K562 (cell line): ENCODE measurements at regions of chr2 and their contacts with region 1.

Region 1: DNA sequence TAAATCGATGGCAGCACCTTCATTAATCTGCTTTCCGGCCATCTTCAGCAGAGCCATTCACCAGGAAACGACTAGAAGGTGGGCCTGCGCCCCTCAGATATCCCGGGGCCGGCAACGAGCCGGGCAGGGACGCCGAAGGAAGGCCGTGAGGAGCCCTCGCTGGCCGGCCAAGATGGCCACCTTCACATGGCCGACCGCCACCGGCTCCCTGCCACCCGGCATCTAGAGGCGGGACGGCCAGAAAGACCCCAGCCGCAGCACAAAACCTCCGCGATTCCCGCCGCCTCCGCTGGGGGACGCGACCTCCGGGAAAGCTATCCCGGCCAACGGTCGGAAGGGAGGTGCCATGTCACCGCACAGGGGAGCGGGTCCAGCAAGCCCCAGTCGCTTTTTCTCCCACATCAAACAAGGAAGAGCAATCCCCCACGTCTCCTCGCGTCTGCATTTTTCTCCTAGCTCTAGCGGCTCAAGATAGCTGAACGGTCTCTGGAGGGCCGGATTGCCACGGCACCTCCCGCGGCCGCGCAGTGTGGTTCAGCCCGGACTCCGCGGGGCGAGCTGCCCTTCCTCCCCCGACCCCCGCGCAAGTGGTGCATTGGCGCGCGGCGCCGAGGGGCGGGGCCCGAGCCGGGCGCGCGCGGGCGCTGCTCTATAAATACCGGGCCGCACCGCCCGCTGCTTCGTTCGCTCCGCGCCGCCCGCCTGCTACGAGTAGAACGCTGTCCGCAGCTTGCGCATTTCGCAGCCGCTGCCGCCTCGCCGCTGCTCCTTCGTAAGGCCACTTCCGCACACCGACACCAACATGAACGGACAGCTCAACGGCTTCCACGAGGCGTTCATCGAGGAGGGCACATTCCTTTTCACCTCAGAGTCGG is at the start of gene MAT2A:
- DNase-seq: peak; percentile 88 to 95 (median 91)
- ATAC-seq: peak; percentile 73
- H3K4me3 ChIP-seq: peak within 1 kb of the TSS; percentile 68
- H3K27ac ChIP-seq: peak within 1 kb of the TSS; percentile 100
- H3K4me1 ChIP-seq: peaks cover 9 to 24% of the 10 kb centered on the region in 2 experiments
- H3K27me3 ChIP-seq: no peaks in the 10 kb centered on the region
- CTCF ChIP-seq: peak; percentile 78 to 86 (median 82)
- EP300 ChIP-seq: peak; percentile 70
- POLR2A ChIP-seq: peak; percentile 100
- RAD21 ChIP-seq: peak; percentile 60 to 72
- polyA plus RNA-seq, gene MAT2A: 130 to 197 TPM

Region 2: GRCh38 chr2:85385746-85386145 is 153.0 kb before region 1 on chr2:
- CTCF ChIA-PET with region 1: no interaction called
- POLR2A ChIA-PET with region 1: interaction called, 1,576 read pairs
- in situ Hi-C with region 1: no loop called
- intact Hi-C with region 1: no loop called
- DNase-seq: no peak
- ATAC-seq: no peak
- H3K4me3 ChIP-seq: no peak overlapping the region
- H3K27ac ChIP-seq: no peak overlapping the region
- H3K4me1 ChIP-seq: peaks cover 0 to 2% of the 10 kb centered on the region in 2 experiments; a peak in 3 of 5 replicates
- H3K27me3 ChIP-seq: no peaks in the 10 kb centered on the region
- CTCF ChIP-seq: no peak
- EP300 ChIP-seq: no peak
- POLR2A ChIP-seq: no peak
- RAD21 ChIP-seq: no peak

Region 3: GRCh38 chr2:85457877-85458316 is 80.8 kb before region 1 on chr2:
- CTCF ChIA-PET with region 1: no interaction called
- POLR2A ChIA-PET with region 1: interaction called, 25 read pairs
- in situ Hi-C with region 1: no loop called
- intact Hi-C with region 1: no loop called
- DNase-seq: no peak
- ATAC-seq: no peak
- H3K4me3 ChIP-seq: no peak overlapping the region
- H3K27ac ChIP-seq: no peak overlapping the region
- H3K4me1 ChIP-seq: peaks cover 2 to 10% of the 10 kb centered on the region in 2 experiments; a peak in 2 of 5 replicates
- H3K27me3 ChIP-seq: no peaks in the 10 kb centered on the region
- CTCF ChIP-seq: no peak
- EP300 ChIP-seq: no peak
- POLR2A ChIP-seq: no peak
- RAD21 ChIP-seq: no peak

Region 4: DNA sequence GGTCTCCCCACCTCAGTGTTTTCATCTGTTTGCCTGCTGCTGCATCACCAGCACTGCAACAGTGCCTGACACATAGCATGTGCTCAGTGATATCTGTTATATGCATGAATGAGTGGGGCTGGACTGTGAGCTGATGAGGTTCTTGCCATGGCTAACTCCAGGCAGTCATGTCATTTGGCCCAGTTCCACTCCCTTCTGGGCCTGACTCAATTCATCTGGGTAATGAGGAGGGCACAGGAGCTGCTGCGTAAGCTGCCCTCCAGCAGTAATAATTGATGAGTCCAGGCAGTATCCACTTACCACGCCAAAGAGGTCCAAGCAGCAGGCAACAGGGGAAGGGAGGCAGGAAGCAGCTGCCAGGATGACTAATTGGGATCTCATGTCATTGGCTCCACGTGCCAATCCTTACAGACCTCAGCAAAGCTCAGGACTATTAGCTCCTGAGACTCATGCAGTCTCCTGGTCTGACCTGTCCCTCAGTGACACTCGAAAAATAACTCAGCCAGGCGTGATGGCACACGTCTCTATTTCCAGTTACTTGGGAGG is 33.9 kb before region 1 on chr2:
- CTCF ChIA-PET with region 1: no interaction called
- POLR2A ChIA-PET with region 1: interaction called, 59 read pairs
- in situ Hi-C with region 1: no loop called
- intact Hi-C with region 1: loop called (anchors 1 kb)
- DNase-seq: peak in 1 of 4 experiments; percentile 54
- ATAC-seq: no peak
- H3K4me3 ChIP-seq: no peak overlapping the region
- H3K27ac ChIP-seq: no peak overlapping the region
- H3K4me1 ChIP-seq: peaks cover 32 to 38% of the 10 kb centered on the region in 2 experiments
- H3K27me3 ChIP-seq: no peaks in the 10 kb centered on the region
- CTCF ChIP-seq: no peak
- EP300 ChIP-seq: no peak
- POLR2A ChIP-seq: no peak
- RAD21 ChIP-seq: no peak

Region 5: DNA sequence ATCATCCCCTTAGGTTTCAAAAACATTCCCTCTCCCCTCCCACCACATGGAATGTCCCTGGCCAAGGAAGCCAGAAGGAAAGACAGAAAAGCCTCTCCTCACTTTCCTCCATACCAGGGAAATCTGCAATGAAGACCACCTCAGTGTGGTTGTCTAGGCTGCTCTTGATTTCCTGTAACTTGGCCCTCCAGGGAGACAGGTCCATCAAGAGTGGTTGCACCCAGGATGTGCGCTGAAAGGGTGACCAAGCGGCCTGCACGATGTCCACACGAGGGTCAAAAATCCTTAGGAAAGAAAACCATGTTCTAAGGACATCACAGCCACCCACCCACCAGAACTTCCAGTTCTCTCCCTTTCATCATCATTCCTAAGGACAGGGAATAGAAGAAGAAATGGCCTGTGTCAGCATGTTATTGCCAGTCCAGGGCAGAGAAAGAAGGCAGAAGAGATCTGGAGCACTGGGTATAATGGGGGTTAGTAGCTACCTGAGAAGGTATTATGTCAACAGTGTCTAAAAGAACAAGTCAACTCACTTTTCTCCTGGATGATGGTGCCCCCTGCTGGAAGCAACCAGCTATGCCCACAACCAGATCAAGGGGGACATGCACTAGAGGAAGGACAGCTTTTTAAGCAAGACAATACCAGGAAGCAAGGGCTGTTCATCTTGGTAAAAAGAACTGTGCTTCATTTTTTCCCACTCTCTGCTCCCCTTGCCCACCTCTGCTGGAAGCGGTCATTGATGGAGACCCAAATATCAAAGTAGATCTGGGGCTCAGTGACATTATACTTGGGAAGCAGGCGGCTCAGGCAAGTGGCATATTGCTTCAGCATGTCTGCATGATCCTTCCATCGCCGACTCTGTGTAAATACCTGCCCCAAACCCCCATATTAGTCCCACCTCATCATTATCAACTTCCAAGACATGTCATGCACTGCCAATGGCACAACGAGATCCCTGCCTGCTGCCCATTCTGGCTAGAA is 13.3 kb after region 1 on chr2:
- CTCF ChIA-PET with region 1: no interaction called
- POLR2A ChIA-PET with region 1: interaction called, 358 read pairs
- in situ Hi-C with region 1: no loop called
- intact Hi-C with region 1: no loop called
- DNase-seq: peak; percentile 64 to 88 (median 72)
- ATAC-seq: peak; percentile 81
- H3K4me3 ChIP-seq: no peak overlapping the region
- H3K27ac ChIP-seq: no peak overlapping the region; the same call in 2 of the 3 replicates
- H3K4me1 ChIP-seq: no peaks in the 10 kb centered on the region; a peak in 1 of 5 replicates
- H3K27me3 ChIP-seq: no peaks in the 10 kb centered on the region
- CTCF ChIP-seq: peak; percentile 83 to 95 (median 91)
- EP300 ChIP-seq: no peak
- POLR2A ChIP-seq: no peak
- RAD21 ChIP-seq: peak; percentile 97 to 98

Region 6: GRCh38 chr2:85602476-85603234 is 63.9 kb after region 1 on chr2 and contains the start of gene TMEM150A:
- CTCF ChIA-PET with region 1: no interaction called
- POLR2A ChIA-PET with region 1: interaction called, 15 read pairs
- in situ Hi-C with region 1: no loop called
- intact Hi-C with region 1: no loop called
- DNase-seq: peak; percentile 88 to 94 (median 90)
- ATAC-seq: peak; percentile 97
- H3K4me3 ChIP-seq: peak within 1 kb of the TSS; percentile 79
- H3K27ac ChIP-seq: peak within 1 kb of the TSS; percentile 27
- H3K4me1 ChIP-seq: peaks cover 9 to 34% of the 10 kb centered on the region in 2 experiments; a peak in 4 of 5 replicates
- H3K27me3 ChIP-seq: no peaks in the 10 kb centered on the region
- CTCF ChIP-seq: peak; percentile 22 to 57 (median 45); a peak in 4 of 6 replicates
- EP300 ChIP-seq: no peak
- POLR2A ChIP-seq: peak; percentile 24; the same call in 1 of the 2 replicates
- RAD21 ChIP-seq: peak; percentile 43 to 46; a peak in 3 of 4 replicates
- polyA plus RNA-seq, gene TMEM150A: 3.9 to 5.3 TPM